ENCODE measurements at regions of chr4 and their contacts with region 1.

Region 1: DNA sequence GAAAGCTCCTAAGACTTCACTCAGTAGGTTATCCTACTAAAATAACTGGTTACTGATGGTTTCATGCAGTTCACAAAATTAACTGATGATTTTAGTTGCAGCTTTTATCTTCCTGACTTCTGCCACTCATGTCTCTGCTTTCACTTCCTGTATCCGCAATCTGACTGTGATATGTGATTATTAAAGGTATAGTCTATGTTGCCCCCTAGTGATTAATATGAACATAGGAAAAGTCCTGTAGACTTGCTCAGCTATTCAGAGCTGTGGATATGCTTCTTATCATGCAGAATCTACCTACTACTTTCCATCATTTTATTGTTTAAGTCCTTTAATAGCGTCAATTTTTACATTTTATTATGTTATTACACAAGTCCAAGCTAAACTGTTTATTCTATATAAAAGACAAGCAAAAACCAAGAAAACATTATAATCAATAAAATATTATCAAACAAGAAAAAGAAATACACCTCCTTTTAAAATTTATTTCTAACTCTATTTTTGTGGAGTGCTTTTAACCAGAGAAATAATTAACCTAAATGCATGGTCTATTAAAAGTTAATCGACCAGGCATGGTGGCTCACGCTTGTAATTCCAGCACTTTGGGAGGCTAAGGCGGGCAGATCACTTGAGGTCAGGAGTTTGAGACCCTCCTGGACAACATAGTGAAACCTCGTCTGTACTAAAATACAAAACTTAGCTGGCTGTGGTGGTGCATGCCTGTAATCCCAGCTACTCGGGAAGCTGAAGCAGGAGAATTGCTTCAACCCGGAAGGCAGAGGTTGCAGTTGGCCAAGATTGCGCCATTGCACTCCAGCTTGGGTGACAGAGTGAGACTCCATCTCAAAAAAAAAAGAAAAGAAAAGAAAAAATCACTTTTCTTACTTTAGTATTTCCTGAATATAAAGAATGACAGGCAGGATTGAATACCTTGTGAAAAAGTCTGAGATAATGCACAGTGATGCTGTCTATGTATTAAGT is 40.4 kb upstream of the TLR2 start:
- DNase-seq: peak; percentile 66
- ATAC-seq: peak; percentile 68
- H3K4me3 ChIP-seq: peak overlapping the region in 1 of 3 experiments; percentile 16; a peak in 1 of 6 replicates
- H3K27ac ChIP-seq: no peak overlapping the region
- H3K4me1 ChIP-seq: peaks cover 22% of the 10 kb centered on the region
- H3K27me3 ChIP-seq: no peaks in the 10 kb centered on the region; a peak in 1 of 5 replicates
- CTCF ChIP-seq: peak; percentile 60
- EP300 ChIP-seq: no peak
- POLR2A ChIP-seq: no peak
- RAD21 ChIP-seq: no peak

Region 2: DNA sequence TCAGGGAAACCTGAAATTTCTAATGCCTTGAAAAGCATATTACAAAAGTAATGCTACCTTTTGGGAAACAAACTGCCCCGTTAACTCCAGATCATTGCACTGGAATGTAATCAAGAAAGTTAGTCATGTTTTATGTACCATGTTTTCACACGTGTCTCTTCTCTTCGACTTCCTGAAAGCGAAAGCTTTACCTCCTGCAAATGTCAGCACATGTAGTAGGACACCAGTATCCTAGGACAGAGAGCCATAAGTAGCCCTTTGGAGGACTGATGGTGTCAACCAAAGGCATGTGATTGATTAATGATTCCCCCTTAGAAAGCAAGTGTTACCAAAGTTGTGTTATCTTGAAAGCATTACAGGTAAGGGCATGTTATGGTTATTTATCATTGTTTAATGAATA is 308.0 kb before region 1 on chr4:
- CTCF ChIA-PET with region 1: no interaction called
- POLR2A ChIA-PET with region 1: no interaction called
- in situ Hi-C with region 1: no loop called
- intact Hi-C with region 1: no loop called
- DNase-seq: no peak
- ATAC-seq: no peak
- H3K4me3 ChIP-seq: no peak overlapping the region
- H3K27ac ChIP-seq: no peak overlapping the region
- H3K4me1 ChIP-seq: no peaks in the 10 kb centered on the region
- H3K27me3 ChIP-seq: no peaks in the 10 kb centered on the region
- CTCF ChIP-seq: no peak
- EP300 ChIP-seq: no peak
- POLR2A ChIP-seq: no peak
- RAD21 ChIP-seq: no peak

Region 3: DNA sequence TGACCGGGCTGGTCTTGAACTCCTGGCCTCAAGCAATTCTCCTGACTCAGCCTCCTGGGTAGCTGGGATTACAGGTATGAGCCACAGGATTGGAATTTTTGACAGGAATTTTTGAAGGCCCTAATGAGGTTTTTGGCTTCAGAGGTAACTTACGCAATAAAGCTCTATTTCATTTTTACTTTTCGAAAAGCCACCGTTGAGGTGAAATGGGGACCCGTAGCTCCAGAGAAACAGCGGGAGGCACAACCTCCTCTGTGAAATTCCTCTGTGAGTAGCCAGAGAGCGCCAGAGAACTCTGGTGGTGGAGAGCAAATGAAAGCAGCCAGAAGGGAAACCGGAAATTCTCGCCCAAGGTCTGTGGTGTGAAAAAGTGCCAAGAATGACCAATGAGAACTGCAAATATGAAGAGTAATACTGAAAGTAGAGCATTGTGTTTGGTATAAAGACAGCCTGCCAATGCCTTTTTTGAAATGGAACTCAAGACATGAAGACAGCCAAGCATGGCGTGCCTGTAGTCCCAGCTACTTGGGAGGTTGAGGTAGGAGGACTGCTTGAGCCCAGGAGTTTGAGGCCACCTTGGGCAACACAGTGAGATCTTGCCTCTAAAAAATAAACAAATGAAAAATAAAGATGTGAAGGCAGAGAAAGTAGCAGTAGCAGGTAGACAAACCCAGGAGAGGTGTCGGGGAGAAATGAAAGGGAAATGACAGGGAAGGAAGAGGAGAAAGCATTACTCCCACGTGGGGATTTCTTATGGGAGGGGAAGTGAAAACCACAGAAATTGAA is 210.5 kb before region 1 on chr4:
- CTCF ChIA-PET with region 1: no interaction called
- POLR2A ChIA-PET with region 1: no interaction called
- in situ Hi-C with region 1: no loop called
- intact Hi-C with region 1: loop called (anchors 10 kb)
- DNase-seq: peak; percentile 79
- ATAC-seq: peak; percentile 95
- H3K4me3 ChIP-seq: no peak overlapping the region
- H3K27ac ChIP-seq: no peak overlapping the region
- H3K4me1 ChIP-seq: peaks cover 15% of the 10 kb centered on the region
- H3K27me3 ChIP-seq: no peaks in the 10 kb centered on the region
- CTCF ChIP-seq: peak; percentile 83
- EP300 ChIP-seq: no peak
- POLR2A ChIP-seq: no peak
- RAD21 ChIP-seq: peak; percentile 86